CD4-positive, alpha-beta T cell (primary cell): ENCODE measurements at regions of chr7 and their contacts with region 1.

Region 1: GRCh38 chr7:100132697-100133151 is 6.0 kb downstream of the MBLAC1 start:
- DNase-seq: peak; percentile 48 to 83 (median 62)
- ATAC-seq: peak; percentile 77
- H3K4me3 ChIP-seq: no peak overlapping the region
- H3K4me3 Mint-ChIP-seq: peak overlapping the region; percentile 62
- H3K27ac ChIP-seq: no peak overlapping the region
- H3K27ac Mint-ChIP-seq: peak overlapping the region; percentile 42
- H3K4me1 ChIP-seq: peaks cover 23% of the 10 kb centered on the region
- H3K4me1 Mint-ChIP-seq: peaks cover 15% of the 10 kb centered on the region
- H3K27me3 ChIP-seq: no peaks in the 10 kb centered on the region
- H3K27me3 Mint-ChIP-seq: no peaks in the 10 kb centered on the region
- CTCF ChIP-seq: peak; percentile 82

Region 2: GRCh38 chr7:99910976-99911375 is 221.7 kb before region 1 on chr7:
- CTCF ChIA-PET with region 1: no interaction called
- POLR2A ChIA-PET with region 1: interaction called, 3 read pairs
- intact Hi-C with region 1: loop called (anchors 1 to 2 kb)
- DNase-seq: no peak
- ATAC-seq: no peak
- H3K4me3 ChIP-seq: no peak overlapping the region
- H3K4me3 Mint-ChIP-seq: no peak overlapping the region
- H3K27ac ChIP-seq: no peak overlapping the region
- H3K27ac Mint-ChIP-seq: no peak overlapping the region
- H3K4me1 ChIP-seq: peaks cover 13% of the 10 kb centered on the region
- H3K4me1 Mint-ChIP-seq: peaks cover 67% of the 10 kb centered on the region
- H3K27me3 ChIP-seq: no peaks in the 10 kb centered on the region
- H3K27me3 Mint-ChIP-seq: no peaks in the 10 kb centered on the region
- CTCF ChIP-seq: no peak

Region 3: DNA sequence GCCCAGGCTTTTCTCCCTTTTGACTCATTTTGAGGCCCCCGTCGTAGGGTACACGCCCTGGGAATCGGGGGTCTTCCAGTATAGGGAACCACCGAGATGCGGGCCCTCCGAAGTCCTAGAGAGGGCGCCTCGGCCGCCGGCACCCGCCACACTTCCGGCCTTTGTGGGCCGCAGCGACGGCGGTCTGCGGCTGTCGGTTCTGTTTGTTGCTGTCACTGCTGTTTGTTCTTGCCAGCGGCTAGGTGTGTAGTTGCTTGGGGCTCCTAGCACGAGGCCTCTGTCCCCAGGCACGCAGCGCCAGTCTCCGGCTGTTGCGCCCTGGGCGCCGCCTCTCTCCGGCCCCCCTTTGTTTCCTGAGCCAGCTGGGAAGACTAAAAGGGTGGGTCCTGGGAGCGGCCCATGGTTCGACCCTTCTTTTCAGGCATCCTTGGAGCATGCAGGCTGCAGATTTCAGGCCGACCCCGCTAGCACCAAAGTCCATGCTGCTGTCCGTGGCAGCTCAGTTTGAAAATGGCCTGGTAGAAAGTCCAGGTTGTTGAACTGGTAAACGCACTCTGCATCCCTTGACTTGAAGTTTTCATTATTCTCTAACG is 135.1 kb before region 1 on chr7:
- CTCF ChIA-PET with region 1: interaction called, 4 read pairs
- POLR2A ChIA-PET with region 1: interaction called, 3 read pairs
- intact Hi-C with region 1: loop called (anchors 1 to 2 kb)
- DNase-seq: peak; percentile 49 to 89 (median 68)
- ATAC-seq: peak; percentile 91
- H3K4me3 ChIP-seq: peak overlapping the region; percentile 48
- H3K4me3 Mint-ChIP-seq: peak overlapping the region; percentile 82
- H3K27ac ChIP-seq: peak overlapping the region; percentile 42 to 66
- H3K27ac Mint-ChIP-seq: peak overlapping the region; percentile 90
- H3K4me1 ChIP-seq: peaks cover 21% of the 10 kb centered on the region
- H3K4me1 Mint-ChIP-seq: peaks cover 22% of the 10 kb centered on the region
- H3K27me3 ChIP-seq: no peaks in the 10 kb centered on the region
- H3K27me3 Mint-ChIP-seq: no peaks in the 10 kb centered on the region
- CTCF ChIP-seq: no peak

Region 4: DNA sequence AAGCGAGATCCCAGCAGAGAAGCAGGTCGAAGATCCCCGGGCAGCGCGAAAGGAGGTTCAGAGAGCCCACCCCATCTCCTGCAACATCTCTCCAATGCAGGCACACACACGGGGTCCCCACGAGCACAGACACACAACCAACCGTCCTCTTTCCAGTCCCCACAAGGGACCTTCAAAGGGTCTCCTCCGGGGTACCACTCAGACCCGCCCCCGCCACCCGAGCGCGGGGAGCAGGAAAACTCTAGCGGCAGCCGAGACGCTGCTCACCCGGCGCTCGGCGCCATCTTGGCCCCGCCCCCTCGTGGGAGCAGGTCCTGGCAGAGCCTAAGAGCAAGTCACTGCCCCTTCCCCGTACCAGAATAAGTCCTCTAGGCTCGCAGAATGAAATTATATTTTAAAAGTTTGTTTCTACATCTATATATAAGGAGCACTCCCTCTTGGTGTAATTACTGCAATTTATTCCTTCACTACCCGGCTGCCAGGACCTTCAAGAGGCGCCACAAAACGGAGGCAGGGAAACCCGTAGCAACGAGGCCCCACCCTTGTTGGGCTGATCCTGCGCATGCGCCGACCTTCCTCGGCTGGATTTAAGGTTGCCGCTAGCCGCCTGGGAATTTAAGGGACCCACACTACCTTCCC is 13.5 kb before region 1 on chr7 and contains the starts of genes CNPY4 and TAF6:
- CTCF ChIA-PET with region 1: interaction called, 14 read pairs
- POLR2A ChIA-PET with region 1: interaction called, 29 read pairs
- intact Hi-C with region 1: loop called (anchors 1 kb)
- DNase-seq: peak; percentile 90 to 98 (median 96)
- ATAC-seq: peak; percentile 70
- H3K4me3 ChIP-seq: peak within 1 kb of the TSS; percentile 93
- H3K4me3 Mint-ChIP-seq: peak within 1 kb of the TSS; percentile 98
- H3K27ac ChIP-seq: peak within 1 kb of the TSS; percentile 79 to 98
- H3K27ac Mint-ChIP-seq: peak within 1 kb of the TSS; percentile 97
- H3K4me1 ChIP-seq: peaks cover 31% of the 10 kb centered on the region
- H3K4me1 Mint-ChIP-seq: peaks cover 24% of the 10 kb centered on the region
- H3K27me3 ChIP-seq: no peaks in the 10 kb centered on the region
- H3K27me3 Mint-ChIP-seq: no peaks in the 10 kb centered on the region
- CTCF ChIP-seq: no peak
- total RNA-seq, gene CNPY4: 22.5 to 25.6 TPM
- total RNA-seq, gene TAF6: 34.8 to 37.4 TPM

Region 5: GRCh38 chr7:100171087-100171681 is 38.5 kb after region 1 on chr7:
- CTCF ChIA-PET with region 1: interaction called, 6 read pairs
- POLR2A ChIA-PET with region 1: interaction called, 4 read pairs
- intact Hi-C with region 1: loop called in 1 of 2 experiments (anchors 1 kb)
- DNase-seq: peak in 6 of 14 experiments; percentile 25 to 69 (median 56)
- ATAC-seq: peak; percentile 22
- H3K4me3 ChIP-seq: peak overlapping the region; percentile 52
- H3K4me3 Mint-ChIP-seq: peak overlapping the region; percentile 85
- H3K27ac ChIP-seq: peak overlapping the region in 1 of 2 donors; percentile 50
- H3K27ac Mint-ChIP-seq: peak overlapping the region; percentile 91
- H3K4me1 ChIP-seq: peaks cover 65% of the 10 kb centered on the region
- H3K4me1 Mint-ChIP-seq: peaks cover 62% of the 10 kb centered on the region
- H3K27me3 ChIP-seq: peaks cover 0 to 3% of the 10 kb centered on the region in 2 experiments
- H3K27me3 Mint-ChIP-seq: no peaks in the 10 kb centered on the region
- CTCF ChIP-seq: no peak

Region 6: DNA sequence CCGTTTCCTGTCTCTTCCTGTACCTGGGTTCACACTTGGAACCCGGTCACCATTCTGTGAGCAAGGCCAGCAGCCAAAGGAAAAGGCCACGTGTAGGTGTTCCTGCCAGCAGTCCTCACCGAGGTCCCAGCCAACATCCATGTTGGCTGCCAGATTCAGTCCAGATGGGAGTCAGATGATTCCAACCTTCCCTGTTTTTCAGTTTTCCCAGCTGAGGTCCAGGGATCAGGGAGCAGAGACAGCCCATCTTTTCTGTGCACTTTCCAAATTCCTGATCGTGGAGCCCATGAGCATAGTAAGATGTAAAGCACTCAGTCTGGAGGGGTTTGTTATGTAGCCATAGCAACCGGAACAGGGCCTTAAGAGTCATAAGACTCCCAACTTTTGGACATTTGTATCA is 83.2 kb after region 1 on chr7:
- CTCF ChIA-PET with region 1: interaction called, 10 read pairs
- POLR2A ChIA-PET with region 1: interaction called, 6 read pairs
- intact Hi-C with region 1: loop called (anchors 1 kb)
- DNase-seq: no peak
- ATAC-seq: no peak
- H3K4me3 ChIP-seq: no peak overlapping the region
- H3K4me3 Mint-ChIP-seq: no peak overlapping the region
- H3K27ac ChIP-seq: no peak overlapping the region
- H3K27ac Mint-ChIP-seq: peak overlapping the region; percentile 40
- H3K4me1 ChIP-seq: peaks cover 52% of the 10 kb centered on the region
- H3K4me1 Mint-ChIP-seq: peaks cover 55% of the 10 kb centered on the region
- H3K27me3 ChIP-seq: no peaks in the 10 kb centered on the region
- H3K27me3 Mint-ChIP-seq: no peaks in the 10 kb centered on the region
- CTCF ChIP-seq: no peak

Region 7: GRCh38 chr7:100342765-100343164 is 210.0 kb after region 1 on chr7:
- CTCF ChIA-PET with region 1: interaction called, 5 read pairs
- POLR2A ChIA-PET with region 1: interaction called, 3 read pairs
- intact Hi-C with region 1: loop called in 1 of 2 experiments (anchors 2 kb)
- DNase-seq: peak in 1 of 14 experiments; percentile 9
- ATAC-seq: no peak
- H3K4me3 ChIP-seq: no peak overlapping the region
- H3K4me3 Mint-ChIP-seq: no peak overlapping the region
- H3K27ac ChIP-seq: no peak overlapping the region
- H3K27ac Mint-ChIP-seq: peak overlapping the region; percentile 78
- H3K4me1 ChIP-seq: peaks cover 18% of the 10 kb centered on the region
- H3K4me1 Mint-ChIP-seq: peaks cover 33% of the 10 kb centered on the region
- H3K27me3 ChIP-seq: no peaks in the 10 kb centered on the region
- H3K27me3 Mint-ChIP-seq: no peaks in the 10 kb centered on the region
- CTCF ChIP-seq: no peak